Activated CD4-positive, alpha-beta T cell treated with anti-CD3 and anti-CD28 coated beads for 36 hours (primary cell): ENCODE measurements at regions of chr4 and their contacts with region 1.

Region 1: GRCh38 chr4:76067652-76068286 is 6.7 kb upstream of the ART3 start:
- DNase-seq: peak; percentile 87
- ATAC-seq: peak; percentile 88
- H3K4me3 Mint-ChIP-seq: no peak overlapping the region
- H3K27ac Mint-ChIP-seq: no peak overlapping the region
- H3K4me1 Mint-ChIP-seq: no peaks in the 10 kb centered on the region
- H3K27me3 Mint-ChIP-seq: peaks cover 2% of the 10 kb centered on the region

Region 2: DNA sequence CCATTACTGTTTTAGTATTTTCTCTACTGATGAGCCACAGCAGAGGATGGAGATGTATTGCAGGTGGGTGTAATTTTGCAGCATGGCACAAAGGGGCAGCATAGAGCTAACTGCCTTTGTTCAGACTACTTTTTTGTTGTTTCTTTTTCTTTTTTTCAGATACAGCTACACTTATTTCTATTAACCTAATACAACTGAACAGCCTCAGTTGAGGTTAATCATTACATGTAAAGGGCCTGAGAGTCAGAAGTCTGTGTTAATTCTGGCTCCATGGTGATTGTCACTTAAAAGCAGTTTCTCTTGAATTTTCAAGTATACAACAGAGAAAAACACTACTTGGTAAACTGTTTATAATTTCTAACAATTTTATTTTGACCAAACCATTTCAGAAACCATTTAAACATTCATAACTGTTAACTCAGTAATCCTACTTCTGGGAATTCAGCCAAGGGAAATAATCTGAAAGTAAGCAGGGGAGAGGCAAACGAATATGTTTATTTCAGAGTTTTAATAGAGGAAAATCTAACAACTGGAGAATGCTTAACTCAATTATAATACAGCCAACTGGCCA is 151.6 kb before region 1 on chr4:
- CTCF ChIA-PET with region 1: interaction called, 3 read pairs
- POLR2A ChIA-PET with region 1: no interaction called
- intact Hi-C with region 1: loop called (anchors 1 to 5 kb)
- DNase-seq: peak; percentile 37
- ATAC-seq: peak; percentile 83
- H3K4me3 Mint-ChIP-seq: no peak overlapping the region
- H3K27ac Mint-ChIP-seq: no peak overlapping the region
- H3K4me1 Mint-ChIP-seq: no peaks in the 10 kb centered on the region
- H3K27me3 Mint-ChIP-seq: no peaks in the 10 kb centered on the region

Region 3: GRCh38 chr4:76341063-76341462 is 273.3 kb after region 1 on chr4:
- CTCF ChIA-PET with region 1: no interaction called
- POLR2A ChIA-PET with region 1: no interaction called
- intact Hi-C with region 1: no loop called
- DNase-seq: no peak
- ATAC-seq: no peak
- H3K4me3 Mint-ChIP-seq: no peak overlapping the region
- H3K27ac Mint-ChIP-seq: no peak overlapping the region
- H3K4me1 Mint-ChIP-seq: no peaks in the 10 kb centered on the region
- H3K27me3 Mint-ChIP-seq: peaks cover 11% of the 10 kb centered on the region